ENCODE measurements at regions of chr7 and their contacts with region 1.

Region 1: DNA sequence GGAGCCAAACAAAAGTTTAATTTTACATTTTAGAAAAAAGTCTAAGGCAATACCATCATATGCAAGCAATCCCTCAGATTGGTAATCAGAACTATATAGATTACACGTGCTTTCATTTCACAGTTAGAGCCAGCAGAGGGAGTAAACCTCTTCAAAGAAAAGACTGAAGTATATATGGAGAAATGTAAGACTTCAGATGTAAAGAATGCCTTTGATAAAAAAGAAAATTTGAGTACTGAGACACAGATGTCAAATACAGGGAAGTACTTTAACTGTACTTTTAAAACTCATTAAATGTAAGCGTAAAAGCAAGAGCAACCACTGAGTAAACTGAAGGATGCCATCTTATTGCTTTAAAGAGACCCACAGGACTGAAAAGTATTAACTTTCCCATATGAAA is 101.4 kb upstream of the FAM133B start:
- DNase-seq: no peak
- ATAC-seq: no peak
- H3K4me3 ChIP-seq: no peak overlapping the region
- H3K27ac ChIP-seq: no peak overlapping the region
- H3K4me1 ChIP-seq: peaks cover 0 to 30% (median 13%) of the 10 kb centered on the region in 12 donors
- H3K27me3 ChIP-seq: no peaks in the 10 kb centered on the region
- CTCF ChIP-seq: peak; percentile 24 to 65 (median 49)
- POLR2A ChIP-seq: no peak

Region 2: DNA sequence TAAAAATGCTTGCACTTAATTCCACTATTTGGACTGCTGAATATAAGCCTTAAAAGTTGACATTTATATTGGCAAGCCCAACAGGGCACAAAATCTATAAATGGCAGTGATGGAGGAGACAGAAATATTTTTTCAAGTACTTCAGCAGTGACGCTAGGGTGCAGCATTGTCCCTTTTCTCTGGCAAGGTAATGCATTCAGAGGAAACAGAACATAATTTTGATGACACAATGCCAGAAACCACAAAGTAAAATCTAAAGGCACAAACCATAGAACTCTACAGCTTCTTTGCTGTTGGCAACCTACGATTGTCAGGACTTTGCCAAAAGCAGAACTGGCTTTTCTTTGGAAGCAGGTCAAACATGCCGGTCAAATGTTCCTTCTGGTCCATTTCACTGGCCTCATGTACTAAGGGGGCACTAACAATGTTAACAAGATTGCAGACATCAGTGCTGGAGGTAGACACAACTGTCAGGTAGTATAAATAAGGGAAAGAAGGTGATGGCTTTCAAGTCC is 70.5 kb before region 1 on chr7:
- intact Hi-C with region 1: loop called in 3 of 10 experiments (anchors 5 kb)
- DNase-seq: peak in 4 of 5 donors; percentile 59 to 77 (median 70)
- ATAC-seq: peak; percentile 68 to 92 (median 86)
- H3K4me3 ChIP-seq: no peak overlapping the region
- H3K27ac ChIP-seq: peak overlapping the region in 8 of 12 donors; percentile 1 to 70 (median 18)
- H3K4me1 ChIP-seq: peaks cover 0 to 31% (median 8%) of the 10 kb centered on the region in 12 donors
- H3K27me3 ChIP-seq: no peaks in the 10 kb centered on the region
- CTCF ChIP-seq: peak; percentile 64 to 85 (median 80)
- POLR2A ChIP-seq: no peak

Region 3: DNA sequence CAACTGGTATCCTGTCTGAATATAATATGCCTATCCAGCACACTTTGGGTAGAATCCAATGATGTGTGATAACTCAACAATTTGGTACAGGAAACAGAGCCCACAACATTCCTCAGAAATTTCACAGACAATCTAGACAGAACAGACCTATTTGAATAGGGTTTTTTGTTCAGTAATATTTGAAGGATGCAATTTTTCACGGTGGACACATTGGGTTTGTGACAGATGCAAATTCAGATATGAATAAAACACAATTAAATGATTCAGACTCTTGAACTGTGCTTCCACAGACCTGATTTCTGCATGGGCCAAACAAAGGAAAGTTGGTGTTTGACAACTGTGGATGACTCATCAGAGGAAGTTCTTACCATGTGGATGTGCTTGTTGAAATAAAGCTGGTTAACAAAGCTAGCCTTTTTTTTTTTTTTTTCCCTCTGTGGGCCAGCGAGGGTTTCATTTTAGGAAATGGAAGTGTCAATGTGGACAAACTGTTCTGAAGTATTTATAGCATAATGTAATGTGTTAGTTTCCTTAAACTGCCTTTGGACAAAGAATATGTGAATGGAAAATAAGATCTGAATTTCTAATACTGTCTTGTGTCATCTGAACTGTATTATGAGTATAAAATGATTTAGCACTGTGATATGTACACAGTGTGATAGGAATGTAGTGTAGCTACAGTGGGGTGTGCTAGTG is 58.2 kb before region 1 on chr7:
- intact Hi-C with region 1: loop called in 6 of 10 experiments (anchors 5 to 10 kb)
- DNase-seq: peak in 1 of 5 donors; percentile 25
- ATAC-seq: peak; percentile 79 to 92 (median 90)
- H3K4me3 ChIP-seq: peak overlapping the region in 1 of 12 donors; percentile 8
- H3K27ac ChIP-seq: peak overlapping the region; percentile 17 to 86 (median 60)
- H3K4me1 ChIP-seq: peaks cover 14 to 62% (median 43%) of the 10 kb centered on the region in 12 donors
- H3K27me3 ChIP-seq: no peaks in the 10 kb centered on the region
- CTCF ChIP-seq: no peak
- POLR2A ChIP-seq: no peak

Region 4: DNA sequence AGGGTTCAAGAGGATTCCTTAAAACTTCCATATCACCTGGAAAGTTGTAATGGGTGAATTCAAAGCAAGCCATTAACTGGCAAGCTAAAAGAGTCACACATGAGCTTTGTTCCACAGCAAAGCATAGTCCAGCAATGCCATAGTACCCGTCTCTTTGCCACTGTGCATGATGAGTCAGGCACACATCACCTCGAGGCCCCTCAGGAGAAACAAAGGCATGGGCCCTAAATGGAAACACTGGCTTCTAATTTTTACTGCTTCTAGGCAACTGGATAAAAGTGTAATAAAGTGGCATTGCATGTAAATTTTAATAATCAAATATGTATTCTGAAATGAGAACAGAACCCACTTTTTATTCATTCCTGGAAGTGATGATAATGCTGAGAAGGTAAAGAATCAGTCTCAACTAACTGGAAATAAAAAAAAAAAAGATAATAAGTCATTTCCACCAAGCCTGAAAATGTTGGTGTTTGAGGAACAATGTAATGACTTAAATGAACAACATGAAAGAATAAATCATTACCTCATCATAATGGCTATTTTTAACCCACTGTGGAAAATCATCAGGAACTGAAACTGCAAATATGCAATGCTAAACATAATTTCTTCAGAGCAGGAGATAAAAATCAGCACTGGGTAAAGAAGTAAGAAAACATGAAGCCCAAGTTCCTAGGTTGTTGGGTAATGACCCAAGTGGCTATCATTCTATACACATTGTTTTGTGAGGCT is 39.9 kb after region 1 on chr7:
- intact Hi-C with region 1: no loop called
- DNase-seq: no peak
- ATAC-seq: peak; percentile 23 to 67 (median 48)
- H3K4me3 ChIP-seq: no peak overlapping the region
- H3K27ac ChIP-seq: peak overlapping the region in 6 of 12 donors; percentile 7 to 74 (median 24)
- H3K4me1 ChIP-seq: peaks cover 0 to 31% (median 10%) of the 10 kb centered on the region in 12 donors
- H3K27me3 ChIP-seq: no peaks in the 10 kb centered on the region
- CTCF ChIP-seq: no peak
- POLR2A ChIP-seq: no peak

Region 5: GRCh38 chr7:92768501-92769393 is 77.2 kb after region 1 on chr7:
- intact Hi-C with region 1: loop called in 1 of 10 experiments (anchors 5 kb)
- DNase-seq: no peak
- ATAC-seq: no peak
- H3K4me3 ChIP-seq: no peak overlapping the region
- H3K27ac ChIP-seq: peak overlapping the region in 1 of 12 donors; percentile 72
- H3K4me1 ChIP-seq: peaks cover 0 to 51% (median 20%) of the 10 kb centered on the region in 12 donors
- H3K27me3 ChIP-seq: no peaks in the 10 kb centered on the region
- CTCF ChIP-seq: no peak
- POLR2A ChIP-seq: no peak

Region 6: DNA sequence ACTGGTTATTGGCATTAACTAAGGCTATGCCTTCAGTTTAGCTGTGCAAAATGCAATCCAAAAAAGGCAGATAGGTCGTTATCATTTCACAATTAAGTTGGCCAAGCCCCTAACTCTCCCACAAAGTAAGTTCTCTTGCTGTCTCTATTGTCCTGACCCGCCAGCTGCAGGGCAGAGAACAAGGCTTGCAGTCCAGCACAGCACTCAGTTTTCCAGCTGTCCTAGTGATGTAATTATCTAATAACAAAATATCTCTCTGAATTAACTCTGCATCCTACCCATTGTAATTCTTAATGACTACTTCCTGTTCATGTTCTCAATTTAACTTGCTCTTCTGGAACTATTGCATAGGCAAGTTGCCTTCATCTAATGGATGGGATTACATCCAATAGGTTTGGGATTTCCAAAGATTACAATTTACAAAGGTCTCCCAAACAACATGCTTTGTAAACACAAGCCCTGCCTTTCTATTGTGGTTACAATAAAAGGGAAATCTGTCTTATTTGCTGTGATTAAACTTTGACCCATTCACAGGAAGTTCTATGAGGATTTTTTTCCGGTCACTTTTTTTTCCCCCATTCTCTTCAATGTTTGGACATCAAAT is 89.6 kb after region 1 on chr7:
- intact Hi-C with region 1: loop called in 1 of 10 experiments (anchors 5 kb)
- DNase-seq: peak; percentile 41 to 58 (median 49)
- ATAC-seq: peak; percentile 73 to 94 (median 80)
- H3K4me3 ChIP-seq: no peak overlapping the region
- H3K27ac ChIP-seq: peak overlapping the region in 11 of 12 donors; percentile 1 to 57 (median 35)
- H3K4me1 ChIP-seq: peaks cover 0 to 63% (median 43%) of the 10 kb centered on the region in 12 donors
- H3K27me3 ChIP-seq: no peaks in the 10 kb centered on the region
- CTCF ChIP-seq: no peak
- POLR2A ChIP-seq: no peak

Region 7: GRCh38 chr7:92988051-92988450 is 296.5 kb after region 1 on chr7:
- intact Hi-C with region 1: loop called in 1 of 10 experiments (anchors 5 kb)
- DNase-seq: no peak
- ATAC-seq: no peak
- H3K4me3 ChIP-seq: no peak overlapping the region
- H3K27ac ChIP-seq: no peak overlapping the region
- H3K4me1 ChIP-seq: no peaks in the 10 kb centered on the region
- H3K27me3 ChIP-seq: no peaks in the 10 kb centered on the region
- CTCF ChIP-seq: peak in 10 of 12 donors; percentile 8 to 50 (median 30)
- POLR2A ChIP-seq: no peak